ENCODE measurements at regions of chr7 and their contacts with region 1.

Region 1: GRCh38 chr7:152675759-152676636 is at the start of gene XRCC2:
- DNase-seq: peak; percentile 87 to 99 (median 96)
- H3K4me3 ChIP-seq: peak within 1 kb of the TSS; percentile 52 to 62
- H3K4me3 Mint-ChIP-seq: peak within 1 kb of the TSS; percentile 89 to 96 (median 95)
- H3K27ac ChIP-seq: peak within 1 kb of the TSS; percentile 73
- H3K27ac Mint-ChIP-seq: peak within 1 kb of the TSS; percentile 69 to 98 (median 94)
- H3K4me1 ChIP-seq: peaks cover 14% of the 10 kb centered on the region
- H3K4me1 Mint-ChIP-seq: peaks cover 4 to 17% (median 11%) of the 10 kb centered on the region in 4 donors
- H3K27me3 ChIP-seq: no peaks in the 10 kb centered on the region
- H3K27me3 Mint-ChIP-seq: no peaks in the 10 kb centered on the region
- total RNA-seq, gene XRCC2: 0.75 to 1.1 TPM

Region 2: GRCh38 chr7:152436111-152436930 is 239.7 kb before region 1 on chr7:
- CTCF ChIA-PET with region 1: no interaction called
- POLR2A ChIA-PET with region 1: interaction called, 3 read pairs
- intact Hi-C with region 1: loop called (anchors 2 kb)
- DNase-seq: peak; percentile 87 to 91 (median 89)
- H3K4me3 ChIP-seq: peak overlapping the region; percentile 17 to 70
- H3K4me3 Mint-ChIP-seq: peak overlapping the region; percentile 83 to 90 (median 86)
- H3K27ac ChIP-seq: peak overlapping the region; percentile 88
- H3K27ac Mint-ChIP-seq: peak overlapping the region; percentile 85 to 97 (median 96)
- H3K4me1 ChIP-seq: peaks cover 28% of the 10 kb centered on the region
- H3K4me1 Mint-ChIP-seq: peaks cover 11 to 32% (median 17%) of the 10 kb centered on the region in 4 donors
- H3K27me3 ChIP-seq: no peaks in the 10 kb centered on the region
- H3K27me3 Mint-ChIP-seq: no peaks in the 10 kb centered on the region

Region 3: GRCh38 chr7:152759949-152760853 is 84.2 kb after region 1 on chr7:
- CTCF ChIA-PET with region 1: no interaction called
- POLR2A ChIA-PET with region 1: no interaction called
- intact Hi-C with region 1: loop called (anchors 1 kb)
- DNase-seq: peak; percentile 12 to 48 (median 23)
- H3K4me3 ChIP-seq: peak overlapping the region; percentile 49 to 68
- H3K4me3 Mint-ChIP-seq: peak overlapping the region; percentile 86 to 96 (median 92)
- H3K27ac ChIP-seq: peak overlapping the region; percentile 81
- H3K27ac Mint-ChIP-seq: peak overlapping the region; percentile 58 to 93 (median 90)
- H3K4me1 ChIP-seq: peaks cover 14% of the 10 kb centered on the region
- H3K4me1 Mint-ChIP-seq: peaks cover 16 to 28% (median 20%) of the 10 kb centered on the region in 4 donors
- H3K27me3 ChIP-seq: no peaks in the 10 kb centered on the region
- H3K27me3 Mint-ChIP-seq: no peaks in the 10 kb centered on the region